ENCODE measurements at regions of chr12 and their contacts with region 1.

Region 1: DNA sequence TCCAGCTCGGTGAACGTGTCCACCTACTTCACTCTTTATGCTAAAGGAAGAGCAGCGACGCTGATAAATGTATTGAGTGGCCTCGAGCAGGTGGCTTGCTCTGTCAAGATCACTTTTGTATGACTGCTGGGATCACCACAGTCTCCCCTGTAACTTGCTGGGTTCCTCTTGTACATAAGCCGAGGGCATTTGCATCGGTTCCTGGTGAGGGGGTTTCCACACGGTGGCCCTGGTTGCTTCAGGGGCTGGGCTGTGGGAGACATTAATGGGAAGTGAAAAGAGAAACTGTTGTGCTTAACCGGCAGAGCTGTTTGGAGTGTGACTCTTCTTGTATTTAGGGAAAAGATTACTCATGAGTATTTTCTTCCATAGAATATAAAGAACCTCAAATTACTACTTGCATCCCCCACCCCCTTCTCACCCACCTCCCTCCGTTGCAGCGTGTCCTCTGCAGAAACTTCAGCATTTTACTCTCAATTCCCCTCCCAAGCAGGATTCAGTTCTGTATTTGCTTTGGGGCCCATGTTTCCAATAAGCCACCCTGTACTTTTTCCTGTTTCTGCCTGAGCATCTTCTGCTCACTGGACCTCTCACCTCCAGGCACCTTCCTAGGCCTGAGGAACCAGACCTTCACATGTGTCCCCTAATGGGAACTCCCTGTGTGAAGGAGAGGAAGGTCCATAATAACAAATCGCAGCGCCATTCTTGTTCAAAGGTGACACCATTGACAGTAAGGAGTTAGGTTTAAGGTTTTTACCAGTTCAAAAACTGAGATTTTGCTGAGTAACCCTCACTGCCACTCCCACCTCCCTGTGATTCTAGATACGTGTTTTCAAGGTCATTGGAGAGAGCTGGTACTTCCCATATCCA is 187.0 kb downstream of the ETV6 start:
- DNase-seq: peak; percentile 73
- ATAC-seq: peak; percentile 94
- H3K4me3 Mint-ChIP-seq: peak overlapping the region; percentile 73
- H3K27ac Mint-ChIP-seq: peak overlapping the region; percentile 95
- H3K4me1 Mint-ChIP-seq: peaks cover 81% of the 10 kb centered on the region
- H3K27me3 Mint-ChIP-seq: no peaks in the 10 kb centered on the region
- CTCF ChIP-seq: no peak

Region 2: DNA sequence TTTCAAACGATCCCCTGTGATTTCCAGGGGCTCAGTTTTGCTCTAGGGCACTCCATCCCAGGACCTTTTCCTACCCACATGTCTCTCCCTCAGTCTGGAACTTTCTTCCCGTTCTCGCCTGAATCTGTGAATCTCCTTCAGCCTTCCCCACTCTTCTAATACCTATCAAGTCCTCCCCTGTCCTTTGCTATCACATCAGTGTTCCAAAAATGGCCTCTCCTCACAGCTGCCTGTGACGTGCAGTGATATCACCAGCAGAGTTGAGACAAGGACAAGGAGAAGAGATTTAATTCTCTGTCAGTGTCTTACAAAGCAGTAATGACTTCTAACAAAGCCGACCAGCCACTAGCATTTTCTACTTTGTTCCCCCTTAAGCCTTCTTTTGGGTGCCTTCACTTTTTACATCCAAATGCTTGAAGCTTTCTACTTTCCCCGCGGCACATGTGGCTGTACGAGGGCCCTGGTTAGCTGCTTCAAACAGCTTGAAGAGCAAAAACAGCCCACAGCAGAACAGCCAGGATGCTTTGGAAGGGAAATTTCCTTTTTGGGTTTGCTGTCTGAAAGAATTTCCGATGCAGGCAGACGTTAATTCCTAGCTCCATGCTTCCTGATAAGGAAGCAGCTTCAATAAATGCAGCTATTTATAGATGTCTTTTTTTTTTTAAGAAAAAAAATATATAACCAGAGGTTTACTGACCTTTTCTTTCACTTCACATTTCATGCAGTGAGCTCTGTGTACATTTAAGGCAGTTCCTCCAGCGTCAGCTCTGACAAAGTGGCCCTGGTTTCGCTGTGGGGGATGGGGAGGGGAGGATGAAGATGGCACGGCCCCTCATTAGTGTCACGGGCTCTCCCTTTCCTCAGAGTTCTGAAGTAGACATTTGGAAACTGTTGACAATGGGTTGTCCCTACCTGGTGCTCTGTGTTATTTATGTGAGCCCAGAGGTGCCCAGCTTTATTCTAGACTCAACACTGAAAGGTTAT is 77.7 kb before region 1 on chr12:
- CTCF ChIA-PET with region 1: interaction called, 4 read pairs
- POLR2A ChIA-PET with region 1: interaction called, 16 read pairs
- intact Hi-C with region 1: no loop called
- DNase-seq: no peak
- ATAC-seq: peak; percentile 74
- H3K4me3 Mint-ChIP-seq: peak overlapping the region; percentile 59
- H3K27ac Mint-ChIP-seq: peak overlapping the region; percentile 91
- H3K4me1 Mint-ChIP-seq: peaks cover 72% of the 10 kb centered on the region
- H3K27me3 Mint-ChIP-seq: no peaks in the 10 kb centered on the region
- CTCF ChIP-seq: no peak

Region 3: GRCh38 chr12:11812586-11813427 is 23.7 kb before region 1 on chr12:
- CTCF ChIA-PET with region 1: interaction called, 3 read pairs
- POLR2A ChIA-PET with region 1: interaction called, 10 read pairs
- intact Hi-C with region 1: no loop called
- DNase-seq: peak; percentile 32
- ATAC-seq: peak; percentile 83
- H3K4me3 Mint-ChIP-seq: peak overlapping the region; percentile 65
- H3K27ac Mint-ChIP-seq: peak overlapping the region; percentile 87
- H3K4me1 Mint-ChIP-seq: peaks cover 66% of the 10 kb centered on the region
- H3K27me3 Mint-ChIP-seq: no peaks in the 10 kb centered on the region
- CTCF ChIP-seq: no peak

Region 4: GRCh38 chr12:11855983-11856374 is 19.5 kb after region 1 on chr12:
- CTCF ChIA-PET with region 1: no interaction called
- POLR2A ChIA-PET with region 1: interaction called, 7 read pairs
- intact Hi-C with region 1: loop called (anchors 1 kb)
- DNase-seq: no peak
- ATAC-seq: peak; percentile 39
- H3K4me3 Mint-ChIP-seq: peak overlapping the region; percentile 67
- H3K27ac Mint-ChIP-seq: peak overlapping the region; percentile 81
- H3K4me1 Mint-ChIP-seq: peaks cover 35% of the 10 kb centered on the region
- H3K27me3 Mint-ChIP-seq: no peaks in the 10 kb centered on the region
- CTCF ChIP-seq: no peak

Region 5: DNA sequence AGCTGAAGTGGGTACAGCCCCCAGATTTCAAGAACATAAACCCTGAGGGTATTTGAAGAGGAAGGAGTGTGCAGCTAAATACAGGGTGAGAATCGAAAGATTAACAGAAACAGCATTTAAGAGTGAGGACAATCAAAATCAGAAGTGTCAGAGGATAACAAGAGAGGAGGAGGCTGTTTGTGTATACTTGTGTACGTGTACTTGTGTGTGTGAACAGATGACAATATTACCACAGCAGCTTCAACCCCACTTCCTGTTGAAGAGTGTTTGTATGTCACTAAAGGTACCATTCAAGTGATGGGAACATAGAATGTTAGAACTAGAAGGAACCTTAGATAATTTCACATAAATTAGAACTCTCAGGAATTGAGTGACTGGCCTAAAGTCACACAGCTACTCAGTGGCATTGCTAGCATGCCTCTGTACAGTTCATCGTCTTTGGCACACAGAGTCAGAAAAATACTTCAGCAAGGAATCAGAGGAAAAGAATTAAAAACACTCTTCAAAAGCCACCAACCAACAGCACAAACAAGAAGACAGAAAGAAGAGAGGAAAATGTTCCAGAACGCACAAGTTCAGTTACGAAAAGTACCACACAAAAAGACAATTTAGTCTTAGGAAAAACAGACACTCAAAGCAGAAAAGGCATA is 69.9 kb after region 1 on chr12:
- CTCF ChIA-PET with region 1: no interaction called
- POLR2A ChIA-PET with region 1: no interaction called
- intact Hi-C with region 1: no loop called
- DNase-seq: no peak
- ATAC-seq: no peak
- H3K4me3 Mint-ChIP-seq: no peak overlapping the region
- H3K27ac Mint-ChIP-seq: no peak overlapping the region
- H3K4me1 Mint-ChIP-seq: peaks cover 11% of the 10 kb centered on the region
- H3K27me3 Mint-ChIP-seq: no peaks in the 10 kb centered on the region
- CTCF ChIP-seq: no peak

Region 6: GRCh38 chr12:12724661-12725545 is 888.4 kb after region 1 on chr12:
- CTCF ChIA-PET with region 1: no interaction called
- POLR2A ChIA-PET with region 1: interaction called, 4 read pairs
- intact Hi-C with region 1: loop called (anchors 5 kb)
- DNase-seq: peak; percentile 81
- ATAC-seq: peak; percentile 69
- H3K4me3 Mint-ChIP-seq: peak overlapping the region; percentile 97
- H3K27ac Mint-ChIP-seq: peak overlapping the region; percentile 97
- H3K4me1 Mint-ChIP-seq: peaks cover 50% of the 10 kb centered on the region
- H3K27me3 Mint-ChIP-seq: no peaks in the 10 kb centered on the region
- CTCF ChIP-seq: no peak

Measured in activated B cell treated with CpG ODN at 0.5 μM for 24 hours (primary cell).